SK-N-SH (cell line): ENCODE measurements at regions of chr4 and their contacts with region 1.

Region 1: GRCh38 chr4:102826890-102827673 is at the start of gene UBE2D3:
- DNase-seq: peak; percentile 78
- H3K4me3 ChIP-seq: peak within 1 kb of the TSS; percentile 84 to 92
- H3K27ac ChIP-seq: peak within 1 kb of the TSS; percentile 100
- H3K4me1 ChIP-seq: peaks cover 12 to 19% of the 10 kb centered on the region in 2 experiments; a peak in 3 of 4 replicates
- H3K27me3 ChIP-seq: no peaks in the 10 kb centered on the region
- CTCF ChIP-seq: no peak; the same call in 1 of the 2 replicates
- EP300 ChIP-seq: peak in 1 of 2 experiments; percentile 15; a peak in 1 of 4 replicates
- RAD21 ChIP-seq: no peak
- polyA plus RNA-seq, gene UBE2D3: 199 and 216 TPM in 2 replicates

Region 2: GRCh38 chr4:102705351-102705935 is 121.6 kb before region 1 on chr4:
- CTCF ChIA-PET with region 1: no interaction called
- POLR2A ChIA-PET with region 1: no interaction called
- DNase-seq: no peak
- H3K4me3 ChIP-seq: no peak overlapping the region
- H3K27ac ChIP-seq: no peak overlapping the region
- H3K4me1 ChIP-seq: no peaks in the 10 kb centered on the region
- H3K27me3 ChIP-seq: no peaks in the 10 kb centered on the region
- CTCF ChIP-seq: no peak
- EP300 ChIP-seq: no peak
- RAD21 ChIP-seq: no peak

Region 3: DNA sequence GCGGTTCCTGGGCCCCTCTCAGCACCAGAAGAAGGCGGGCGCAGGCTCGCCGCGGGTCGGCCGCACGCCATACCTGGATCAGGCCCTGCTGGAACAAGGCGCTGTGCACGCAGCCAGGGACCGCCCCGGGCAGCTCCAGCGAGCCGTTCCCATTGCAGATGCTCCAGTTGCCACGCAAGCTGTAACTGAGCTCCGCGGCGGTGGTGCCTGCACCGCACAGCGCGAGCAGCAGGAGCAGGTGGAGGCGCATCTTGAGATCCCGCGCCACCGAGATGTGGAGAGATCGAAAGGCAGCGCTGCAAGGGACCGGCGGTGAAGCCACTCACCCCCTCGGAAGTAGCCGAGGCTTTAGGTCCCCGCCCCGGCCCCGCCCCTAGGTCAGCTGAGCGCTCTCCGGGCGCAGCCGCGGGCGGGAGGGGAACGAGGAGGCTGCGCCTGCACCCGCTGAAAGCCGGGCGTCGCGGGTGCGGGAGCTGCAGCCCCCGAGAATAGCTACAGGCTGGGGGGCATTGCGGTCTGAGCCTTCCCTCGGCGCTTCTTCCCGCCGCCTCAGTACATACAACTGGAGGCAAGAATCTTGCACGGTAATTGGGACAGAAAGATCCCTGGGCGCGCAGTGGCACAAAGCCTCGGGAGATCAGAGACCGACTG is 66.3 kb before region 1 on chr4 and contains the start of gene MANBA:
- CTCF ChIA-PET with region 1: no interaction called
- POLR2A ChIA-PET with region 1: interaction called, 13 read pairs
- DNase-seq: peak; percentile 94
- H3K4me3 ChIP-seq: peak within 1 kb of the TSS; percentile 92 to 97
- H3K27ac ChIP-seq: peak within 1 kb of the TSS; percentile 50 to 80; a peak in 3 of 4 replicates
- H3K4me1 ChIP-seq: peaks cover 0 to 11% of the 10 kb centered on the region in 2 experiments; a peak in 1 of 4 replicates
- H3K27me3 ChIP-seq: no peaks in the 10 kb centered on the region
- CTCF ChIP-seq: no peak
- EP300 ChIP-seq: no peak
- RAD21 ChIP-seq: no peak
- polyA plus RNA-seq, gene MANBA: 12.0 and 13.4 TPM in 2 replicates

Region 4: GRCh38 chr4:102815981-102816380 is 11.1 kb before region 1 on chr4:
- CTCF ChIA-PET with region 1: interaction called, 8 read pairs
- POLR2A ChIA-PET with region 1: interaction called, 19 read pairs
- DNase-seq: no peak
- H3K4me3 ChIP-seq: peak overlapping the region in 1 of 2 experiments; percentile 0; a peak in 1 of 4 replicates
- H3K27ac ChIP-seq: peak overlapping the region in 1 of 2 experiments; percentile 88; a peak in 2 of 4 replicates
- H3K4me1 ChIP-seq: peaks cover 6 to 19% of the 10 kb centered on the region in 2 experiments
- H3K27me3 ChIP-seq: no peaks in the 10 kb centered on the region
- CTCF ChIP-seq: no peak
- EP300 ChIP-seq: peak in 1 of 2 experiments; percentile 65; a peak in 1 of 4 replicates
- RAD21 ChIP-seq: no peak

Region 5: GRCh38 chr4:102868781-102869568 is 41.9 kb after region 1 on chr4 and contains the start of gene CISD2:
- CTCF ChIA-PET with region 1: interaction called, 5 read pairs
- POLR2A ChIA-PET with region 1: interaction called, 85 read pairs
- DNase-seq: peak; percentile 94
- H3K4me3 ChIP-seq: peak within 1 kb of the TSS; percentile 68 to 70
- H3K27ac ChIP-seq: peak within 1 kb of the TSS; percentile 89 to 98
- H3K4me1 ChIP-seq: peaks cover 9 to 10% of the 10 kb centered on the region in 2 experiments; a peak in 3 of 4 replicates
- H3K27me3 ChIP-seq: no peaks in the 10 kb centered on the region
- CTCF ChIP-seq: no peak
- EP300 ChIP-seq: no peak
- RAD21 ChIP-seq: no peak
- polyA plus RNA-seq, gene CISD2: 21.4 and 23.1 TPM in 2 replicates